BJ (cell line): ENCODE measurements at regions of chr15 and their contacts with region 1.

Region 1: DNA sequence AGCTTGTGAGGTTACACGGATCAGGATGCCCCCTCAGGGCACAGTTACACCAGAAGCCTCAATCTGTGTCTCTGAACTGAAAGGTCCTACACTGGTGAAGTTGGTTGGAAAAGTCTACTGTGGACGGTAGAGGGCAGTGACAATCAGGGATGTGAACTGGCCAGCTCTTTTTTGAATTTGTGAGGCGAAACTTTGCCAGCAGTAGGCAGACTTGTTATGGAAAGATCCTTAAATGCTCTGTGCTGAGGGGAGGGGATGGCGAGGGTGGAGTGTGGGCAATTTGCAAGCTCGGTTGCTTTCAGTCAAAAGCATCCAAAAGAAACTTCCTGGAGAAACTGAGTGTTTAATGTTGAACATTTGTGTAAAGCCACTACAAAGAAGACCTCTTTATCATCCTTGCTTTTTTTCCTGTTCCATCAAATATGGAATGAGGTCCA is 127.4 kb upstream of the ABHD17C start:
- DNase-seq: peak; percentile 73
- H3K4me3 ChIP-seq: no peak overlapping the region
- H3K27me3 ChIP-seq: no peaks in the 10 kb centered on the region
- CTCF ChIP-seq: peak; percentile 94

Region 2: GRCh38 chr15:80526556-80527340 is 41.0 kb before region 1 on chr15:
- CTCF ChIA-PET with region 1: interaction called, 13 read pairs
- POLR2A ChIA-PET with region 1: no interaction called
- DNase-seq: peak; percentile 81
- H3K4me3 ChIP-seq: no peak overlapping the region
- H3K27me3 ChIP-seq: no peaks in the 10 kb centered on the region
- CTCF ChIP-seq: no peak

Region 3: DNA sequence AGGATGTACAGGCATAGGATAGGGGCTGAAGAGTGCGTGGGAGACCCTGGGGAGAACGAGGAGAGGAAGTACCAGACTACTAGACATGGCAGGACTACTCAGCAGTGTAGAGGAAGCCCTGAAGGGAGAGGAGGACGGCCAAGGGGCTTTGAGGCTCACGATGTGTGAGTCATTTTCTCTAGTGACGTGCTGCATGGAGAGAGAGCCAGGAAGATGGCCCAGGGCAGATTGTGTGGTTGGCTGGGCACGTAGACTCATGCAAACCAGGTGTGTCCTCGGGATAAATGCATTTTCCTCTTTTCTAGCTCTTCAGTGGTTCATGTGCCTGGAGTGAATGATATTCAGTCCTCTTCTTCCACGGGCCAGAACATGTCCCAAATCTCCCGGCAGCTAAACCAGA is 12.4 kb after region 1 on chr15:
- CTCF ChIA-PET with region 1: interaction called, 40 read pairs
- POLR2A ChIA-PET with region 1: no interaction called
- DNase-seq: peak; percentile 88
- H3K4me3 ChIP-seq: no peak overlapping the region
- H3K27me3 ChIP-seq: no peaks in the 10 kb centered on the region
- CTCF ChIP-seq: no peak

Region 4: DNA sequence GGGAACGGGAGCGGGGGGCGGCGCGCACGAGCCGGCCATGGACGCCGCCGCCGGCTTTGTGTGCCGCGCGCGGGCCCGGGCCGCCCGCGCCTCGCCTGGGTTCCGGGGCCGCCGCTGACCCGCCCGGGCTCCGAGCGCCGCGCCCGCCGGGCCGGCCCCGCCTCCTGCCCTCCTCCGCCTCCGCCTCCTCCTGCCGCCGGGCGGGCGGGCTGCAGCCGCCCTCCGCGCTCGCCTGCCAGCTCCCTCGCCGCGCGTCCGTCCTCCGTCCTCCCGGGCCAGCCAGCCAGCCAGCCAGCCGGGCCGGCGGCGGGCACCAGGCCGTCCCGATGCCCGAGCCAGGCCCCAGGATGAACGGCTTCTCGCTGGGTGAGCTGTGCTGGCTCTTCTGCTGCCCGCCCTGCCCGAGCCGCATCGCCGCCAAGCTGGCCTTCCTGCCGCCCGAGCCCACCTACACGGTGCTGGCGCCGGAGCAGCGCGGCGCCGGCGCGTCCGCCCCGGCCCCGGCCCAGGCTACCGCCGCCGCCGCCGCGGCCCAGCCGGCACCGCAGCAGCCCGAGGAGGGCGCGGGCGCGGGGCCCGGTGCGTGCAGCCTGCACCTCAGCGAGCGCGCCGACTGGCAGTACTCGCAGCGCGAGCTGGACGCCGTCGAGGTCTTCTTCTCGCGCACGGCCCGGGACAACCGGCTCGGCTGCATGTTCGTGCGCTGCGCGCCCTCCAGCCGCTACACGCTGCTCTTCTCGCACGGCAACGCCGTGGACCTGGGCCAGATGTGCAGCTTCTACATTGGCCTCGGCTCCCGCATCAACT is 127.6 kb after region 1 on chr15 and contains the start of gene ABHD17C:
- CTCF ChIA-PET with region 1: interaction called, 13 read pairs
- POLR2A ChIA-PET with region 1: interaction called, 7 read pairs
- DNase-seq: no peak
- H3K4me3 ChIP-seq: peak within 1 kb of the TSS; percentile 92
- H3K27me3 ChIP-seq: no peaks in the 10 kb centered on the region
- CTCF ChIP-seq: no peak
- polyA plus RNA-seq, gene ABHD17C: 19.2 and 22.6 TPM in 2 replicates